AG04449 (cell line): ENCODE measurements at regions of chr5 and their contacts with region 1.

Region 1: DNA sequence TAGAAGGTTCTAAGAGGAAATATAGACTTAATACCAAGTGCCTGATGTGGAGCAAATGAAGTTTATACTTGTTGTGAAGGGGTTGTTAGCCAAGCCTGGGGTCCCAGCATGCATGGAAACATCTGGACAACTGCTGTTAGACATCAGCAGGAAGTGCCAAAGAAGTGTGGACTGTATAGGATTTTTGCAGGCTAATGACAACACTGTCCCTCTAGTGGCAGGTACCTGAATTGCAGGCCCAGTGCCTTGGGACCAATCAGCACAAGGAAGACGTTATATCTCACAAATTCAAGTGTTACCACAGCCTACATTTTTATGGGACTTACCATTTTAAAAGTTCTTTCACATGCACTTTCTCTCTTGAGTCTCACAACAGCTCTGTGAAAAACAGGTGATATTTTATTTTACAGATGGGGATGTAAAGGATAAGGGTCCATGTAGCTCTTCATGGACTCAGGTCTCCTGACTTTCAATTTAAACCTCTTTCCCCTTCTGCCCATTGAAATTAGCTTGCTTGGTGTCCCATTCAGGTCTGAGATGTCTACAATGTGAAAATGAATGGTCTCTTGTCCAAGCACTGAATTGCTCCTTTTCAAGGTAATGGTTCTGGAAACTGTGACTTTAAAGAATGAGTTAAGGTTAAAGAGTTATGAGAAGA is 89.0 kb upstream of the MAP1B start:
- DNase-seq: no peak
- H3K4me3 ChIP-seq: no peak overlapping the region
- CTCF ChIP-seq: peak; percentile 78

Region 2: DNA sequence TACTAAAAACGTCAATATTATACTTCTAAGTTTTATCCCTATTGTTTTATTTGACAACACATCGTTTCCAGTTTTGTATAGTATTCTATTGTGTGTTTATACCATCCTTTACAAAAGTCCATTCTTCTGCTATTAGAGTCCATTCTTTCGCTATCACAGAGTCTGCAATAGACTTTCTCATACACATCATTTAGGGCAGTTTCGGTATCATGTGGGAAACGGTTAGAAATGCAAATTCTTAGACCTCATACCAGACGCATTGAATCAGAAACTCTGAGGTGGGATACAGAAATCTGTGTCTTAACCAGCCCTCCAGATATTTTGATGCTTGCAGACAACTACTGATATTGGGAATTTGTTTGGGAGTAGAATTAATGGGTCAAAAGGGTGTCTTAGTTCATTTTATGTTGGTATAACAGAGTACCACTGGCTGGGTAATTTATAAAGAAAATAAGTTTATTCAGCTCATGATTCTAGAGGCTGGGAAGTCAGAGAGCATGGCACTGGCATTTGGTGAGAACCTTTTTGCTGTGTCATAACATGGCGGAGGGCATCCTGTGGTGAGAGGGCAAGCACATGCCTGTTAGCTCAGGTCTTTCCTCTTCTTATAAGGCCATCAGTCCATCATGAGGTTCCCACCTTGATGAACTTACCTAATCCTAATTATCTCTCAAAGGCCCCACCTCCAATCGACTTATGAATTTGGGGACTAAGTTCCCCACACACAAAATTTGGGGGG is 278.1 kb before region 1 on chr5:
- CTCF ChIA-PET with region 1: no interaction called
- POLR2A ChIA-PET with region 1: no interaction called
- DNase-seq: no peak
- H3K4me3 ChIP-seq: no peak overlapping the region
- CTCF ChIP-seq: no peak

Region 3: DNA sequence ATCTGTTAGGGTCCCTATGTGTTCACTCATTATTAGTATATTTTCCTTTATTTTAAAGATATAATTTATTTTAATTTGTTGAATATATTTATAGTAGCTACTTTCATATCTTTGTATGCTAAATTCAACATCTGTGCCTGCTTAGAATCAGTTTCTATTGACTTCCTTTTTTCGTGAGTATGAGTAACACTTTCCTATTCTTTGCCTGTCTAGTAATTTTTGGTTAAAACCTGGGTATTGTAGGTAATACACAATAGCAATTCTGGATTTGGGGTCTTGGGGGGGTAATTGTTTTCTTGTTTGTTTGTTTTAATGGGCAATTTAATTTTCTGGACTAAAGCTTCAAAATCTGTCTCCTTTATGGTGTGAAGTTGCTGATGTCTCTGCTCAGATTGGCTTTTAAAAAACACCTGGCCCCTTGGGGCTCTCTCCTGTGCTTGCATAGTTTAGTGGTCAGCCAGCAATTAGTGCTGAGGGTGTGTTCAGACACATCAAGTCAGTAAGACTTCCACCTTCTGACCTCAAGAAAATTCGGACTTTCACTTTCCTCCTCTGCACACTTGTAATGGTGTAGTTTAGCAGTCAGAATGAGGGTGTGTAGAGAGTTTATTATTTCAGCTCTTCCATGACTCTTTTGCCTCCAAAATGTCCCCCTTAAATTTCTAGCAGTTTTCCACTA is 35.4 kb before region 1 on chr5:
- CTCF ChIA-PET with region 1: no interaction called
- POLR2A ChIA-PET with region 1: no interaction called
- DNase-seq: no peak
- H3K4me3 ChIP-seq: no peak overlapping the region
- CTCF ChIP-seq: no peak

Region 4: GRCh38 chr5:71996789-71997188 is 21.5 kb before region 1 on chr5:
- CTCF ChIA-PET with region 1: interaction called, 11 read pairs
- POLR2A ChIA-PET with region 1: no interaction called
- DNase-seq: no peak
- H3K4me3 ChIP-seq: no peak overlapping the region
- CTCF ChIP-seq: no peak

Region 5: GRCh38 chr5:72030237-72030636 is 12.0 kb after region 1 on chr5:
- CTCF ChIA-PET with region 1: interaction called, 14 read pairs
- POLR2A ChIA-PET with region 1: no interaction called
- DNase-seq: no peak
- H3K4me3 ChIP-seq: no peak overlapping the region
- CTCF ChIP-seq: no peak